ENCODE measurements at regions of chr2 and their contacts with region 1.

Region 1: GRCh38 chr2:152525277-152525838 is 190.4 kb downstream of the FMNL2 start:
- DNase-seq: no peak
- ATAC-seq: no peak
- H3K4me3 ChIP-seq: no peak overlapping the region
- H3K27ac ChIP-seq: no peak overlapping the region
- H3K4me1 ChIP-seq: no peaks in the 10 kb centered on the region
- H3K27me3 ChIP-seq: no peaks in the 10 kb centered on the region
- CTCF ChIP-seq: no peak
- EP300 ChIP-seq: no peak
- POLR2A ChIP-seq: no peak
- RAD21 ChIP-seq: no peak

Region 2: DNA sequence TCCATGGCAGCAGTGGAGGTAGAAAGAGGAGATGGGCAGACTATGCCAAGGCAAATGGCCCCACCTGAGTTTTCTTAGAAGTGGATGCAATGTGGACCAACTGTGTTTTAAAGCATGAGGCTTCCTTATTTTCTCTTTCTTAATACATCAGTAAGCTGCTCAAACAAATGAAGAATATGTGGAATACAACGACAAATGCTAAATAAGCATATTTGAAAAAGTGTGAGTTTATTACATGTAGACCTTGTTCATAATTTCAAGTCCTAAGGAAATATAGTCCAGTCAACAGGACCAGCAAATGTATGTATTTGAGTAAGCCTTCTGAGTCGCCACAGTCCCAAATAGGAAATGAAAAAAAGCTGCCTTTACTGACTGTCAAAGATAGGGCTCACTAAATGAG is 14.1 kb after region 1 on chr2:
- CTCF ChIA-PET with region 1: no interaction called
- POLR2A ChIA-PET with region 1: no interaction called
- RAD21 ChIA-PET with region 1: no interaction called
- SMC1A ChIA-PET with region 1: interaction called, 12 read pairs
- in situ Hi-C with region 1: no loop called
- intact Hi-C with region 1: no loop called
- DNase-seq: no peak
- ATAC-seq: no peak
- H3K4me3 ChIP-seq: no peak overlapping the region
- H3K27ac ChIP-seq: no peak overlapping the region
- H3K4me1 ChIP-seq: no peaks in the 10 kb centered on the region
- H3K27me3 ChIP-seq: no peaks in the 10 kb centered on the region
- CTCF ChIP-seq: no peak
- EP300 ChIP-seq: no peak
- POLR2A ChIP-seq: no peak
- RAD21 ChIP-seq: no peak

Measured in GM12878 (cell line).